ENCODE measurements at regions of chr13 and their contacts with region 1.

Region 1: DNA sequence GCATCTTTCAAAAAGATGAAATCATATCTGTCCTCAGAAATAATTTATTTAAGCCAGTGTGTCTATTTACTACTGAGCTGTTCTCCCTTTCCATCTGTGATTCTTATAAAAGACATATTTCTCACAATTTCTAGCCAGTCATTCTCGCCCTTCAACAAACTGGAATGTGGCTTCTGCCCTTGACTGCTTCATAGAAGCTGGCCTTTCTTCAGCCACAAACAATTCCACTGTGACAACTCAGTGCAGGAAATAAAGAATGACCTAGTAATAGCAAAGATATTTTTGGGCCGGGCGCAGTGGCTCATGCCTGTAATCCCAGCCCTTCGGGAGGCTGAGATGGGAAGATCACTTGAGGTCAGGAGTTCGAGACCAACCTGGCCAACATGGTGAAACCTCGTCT is 655.5 kb downstream of the PCDH9 start:
- DNase-seq: no peak
- H3K4me3 ChIP-seq: no peak overlapping the region
- H3K27ac ChIP-seq: no peak overlapping the region
- H3K4me1 ChIP-seq: no peaks in the 10 kb centered on the region
- CTCF ChIP-seq: no peak

Region 2: GRCh38 chr13:66558506-66558905 is 16.1 kb before region 1 on chr13:
- CTCF ChIA-PET with region 1: no interaction called
- POLR2A ChIA-PET with region 1: interaction called, 18 read pairs
- intact Hi-C with region 1: no loop called
- DNase-seq: peak; percentile 50
- H3K4me3 ChIP-seq: no peak overlapping the region
- H3K27ac ChIP-seq: peak overlapping the region; percentile 14
- H3K4me1 ChIP-seq: peaks cover 11% of the 10 kb centered on the region
- CTCF ChIP-seq: no peak

Region 3: GRCh38 chr13:66586489-66586888 is 11.9 kb after region 1 on chr13:
- CTCF ChIA-PET with region 1: no interaction called
- POLR2A ChIA-PET with region 1: interaction called, 39 read pairs
- intact Hi-C with region 1: no loop called
- DNase-seq: no peak
- H3K4me3 ChIP-seq: no peak overlapping the region
- H3K27ac ChIP-seq: no peak overlapping the region
- H3K4me1 ChIP-seq: no peaks in the 10 kb centered on the region
- CTCF ChIP-seq: no peak

Measured in OCI-LY7 (cell line).